GM10248 (cell line): ENCODE measurements at regions of chr10 and their contacts with region 1.

Region 1: GRCh38 chr10:47311932-47312662 is 10.2 kb upstream of the GDF2 start:
- DNase-seq: peak; percentile 85
- CTCF ChIP-seq: peak; percentile 90

Region 2: GRCh38 chr10:47024399-47025252 is 287.5 kb before region 1 on chr10:
- CTCF ChIA-PET with region 1: interaction called, 68 read pairs
- POLR2A ChIA-PET with region 1: no interaction called
- DNase-seq: peak; percentile 82
- CTCF ChIP-seq: peak; percentile 82

Region 3: GRCh38 chr10:47031211-47031900 is 280.7 kb before region 1 on chr10:
- CTCF ChIA-PET with region 1: interaction called, 68 read pairs
- POLR2A ChIA-PET with region 1: no interaction called
- DNase-seq: no peak
- CTCF ChIP-seq: no peak

Region 4: GRCh38 chr10:47288916-47289495 is 23.1 kb before region 1 on chr10:
- CTCF ChIA-PET with region 1: interaction called, 17 read pairs
- POLR2A ChIA-PET with region 1: no interaction called
- DNase-seq: no peak
- CTCF ChIP-seq: no peak

Region 5: GRCh38 chr10:47322300-47323061 is 10.4 kb after region 1 on chr10 and contains the start of gene GDF2:
- CTCF ChIA-PET with region 1: interaction called, 16 read pairs
- POLR2A ChIA-PET with region 1: no interaction called
- DNase-seq: no peak
- CTCF ChIP-seq: no peak